ENCODE measurements at regions of chr10 and their contacts with region 1.

Region 1: GRCh38 chr10:23438550-23439441 is at the start of gene OTUD1:
- DNase-seq: peak; percentile 88 to 98 (median 94)
- ATAC-seq: peak; percentile 87
- H3K4me3 ChIP-seq: peak within 1 kb of the TSS; percentile 74
- H3K4me3 Mint-ChIP-seq: peak within 1 kb of the TSS; percentile 98
- H3K27ac ChIP-seq: peak within 1 kb of the TSS; percentile 76 to 81
- H3K27ac Mint-ChIP-seq: peak within 1 kb of the TSS; percentile 99
- H3K4me1 ChIP-seq: peaks cover 21% of the 10 kb centered on the region
- H3K4me1 Mint-ChIP-seq: peaks cover 42% of the 10 kb centered on the region
- H3K27me3 ChIP-seq: no peaks in the 10 kb centered on the region
- H3K27me3 Mint-ChIP-seq: no peaks in the 10 kb centered on the region
- CTCF ChIP-seq: no peak
- total RNA-seq, gene OTUD1: 94.5 to 94.8 TPM

Region 2: DNA sequence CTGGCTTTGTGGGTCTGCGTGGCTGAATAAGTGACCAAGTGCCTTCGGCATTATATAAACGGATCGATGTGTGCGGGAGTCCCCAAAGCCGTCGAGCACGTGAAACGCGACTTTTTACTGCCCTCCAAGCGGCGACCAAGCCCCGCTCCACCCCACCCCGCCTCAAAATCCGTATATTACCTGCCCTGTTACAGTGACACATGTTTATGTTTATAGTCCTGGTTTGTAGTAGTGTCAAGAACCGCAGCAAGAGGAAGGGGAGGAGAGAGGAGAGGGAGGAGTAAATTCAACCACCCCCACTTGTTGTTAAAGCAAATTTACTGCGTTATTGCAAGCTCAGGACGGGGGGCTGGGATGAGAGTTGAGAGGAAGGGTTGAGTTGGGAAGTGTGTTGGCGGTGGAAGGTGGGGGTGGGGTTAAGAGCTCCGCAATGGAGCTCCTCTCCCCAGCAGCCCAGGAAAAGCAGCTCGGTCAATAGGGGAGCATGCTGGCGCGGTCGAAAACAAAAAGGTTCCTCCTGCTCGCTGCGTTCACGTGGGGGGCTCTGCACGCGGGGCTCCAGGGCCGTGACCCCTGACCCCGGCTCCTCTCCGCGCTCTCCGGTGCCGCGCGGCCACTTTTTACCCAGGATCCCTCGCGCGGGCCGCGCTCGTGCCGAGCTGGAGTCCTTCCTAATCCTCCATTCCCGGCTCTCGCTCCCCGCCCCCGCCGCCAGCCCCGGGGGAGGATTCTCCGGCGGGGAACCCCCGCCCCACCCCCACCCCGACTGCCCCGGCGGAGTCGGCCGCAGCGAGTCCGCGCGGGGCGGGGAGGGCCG is 1913.2 kb before region 1 on chr10 and contains the start of gene SKIDA1:
- CTCF ChIA-PET with region 1: no interaction called
- POLR2A ChIA-PET with region 1: no interaction called
- intact Hi-C with region 1: loop called in 1 of 2 experiments (anchors 10 kb)
- DNase-seq: peak in 13 of 14 experiments; percentile 33 to 83 (median 50)
- ATAC-seq: peak; percentile 79
- H3K4me3 ChIP-seq: peak within 1 kb of the TSS; percentile 80
- H3K4me3 Mint-ChIP-seq: peak within 1 kb of the TSS; percentile 98
- H3K27ac ChIP-seq: peak within 1 kb of the TSS; percentile 61 to 66
- H3K27ac Mint-ChIP-seq: peak within 1 kb of the TSS; percentile 86
- H3K4me1 ChIP-seq: peaks cover 25% of the 10 kb centered on the region
- H3K4me1 Mint-ChIP-seq: peaks cover 37% of the 10 kb centered on the region
- H3K27me3 ChIP-seq: peaks cover 5 to 26% of the 10 kb centered on the region in 2 experiments
- H3K27me3 Mint-ChIP-seq: peaks cover 36% of the 10 kb centered on the region
- CTCF ChIP-seq: no peak
- total RNA-seq, gene SKIDA1: 0.22 to 0.25 TPM

Region 3: GRCh38 chr10:22228943-22229801 is 1209.6 kb before region 1 on chr10:
- CTCF ChIA-PET with region 1: no interaction called
- POLR2A ChIA-PET with region 1: no interaction called
- intact Hi-C with region 1: loop called in 1 of 2 experiments (anchors 10 kb)
- DNase-seq: peak; percentile 72 to 93 (median 82)
- ATAC-seq: peak; percentile 77
- H3K4me3 ChIP-seq: peak overlapping the region; percentile 62
- H3K4me3 Mint-ChIP-seq: peak overlapping the region; percentile 92
- H3K27ac ChIP-seq: peak overlapping the region; percentile 25 to 53
- H3K27ac Mint-ChIP-seq: peak overlapping the region; percentile 99
- H3K4me1 ChIP-seq: peaks cover 3% of the 10 kb centered on the region
- H3K4me1 Mint-ChIP-seq: peaks cover 19% of the 10 kb centered on the region
- H3K27me3 ChIP-seq: no peaks in the 10 kb centered on the region
- H3K27me3 Mint-ChIP-seq: peaks cover 11% of the 10 kb centered on the region
- CTCF ChIP-seq: no peak

Region 4: GRCh38 chr10:23338178-23338828 is 100.5 kb before region 1 on chr10:
- CTCF ChIA-PET with region 1: interaction called, 3 read pairs
- POLR2A ChIA-PET with region 1: interaction called, 16 read pairs
- intact Hi-C with region 1: loop called (anchors 5 to 10 kb)
- DNase-seq: no peak
- ATAC-seq: no peak
- H3K4me3 ChIP-seq: no peak overlapping the region
- H3K4me3 Mint-ChIP-seq: no peak overlapping the region
- H3K27ac ChIP-seq: no peak overlapping the region
- H3K27ac Mint-ChIP-seq: no peak overlapping the region
- H3K4me1 ChIP-seq: peaks cover 20% of the 10 kb centered on the region
- H3K4me1 Mint-ChIP-seq: peaks cover 31% of the 10 kb centered on the region
- H3K27me3 ChIP-seq: no peaks in the 10 kb centered on the region
- H3K27me3 Mint-ChIP-seq: no peaks in the 10 kb centered on the region
- CTCF ChIP-seq: no peak

Region 5: GRCh38 chr10:23362879-23363792 is 75.7 kb before region 1 on chr10:
- CTCF ChIA-PET with region 1: no interaction called
- POLR2A ChIA-PET with region 1: interaction called, 49 read pairs
- intact Hi-C with region 1: loop called (anchors 5 kb)
- DNase-seq: peak in 11 of 14 experiments; percentile 25 to 83 (median 38)
- ATAC-seq: peak; percentile 84
- H3K4me3 ChIP-seq: peak overlapping the region; percentile 36
- H3K4me3 Mint-ChIP-seq: peak overlapping the region; percentile 79
- H3K27ac ChIP-seq: peak overlapping the region; percentile 68 to 72
- H3K27ac Mint-ChIP-seq: peak overlapping the region; percentile 80
- H3K4me1 ChIP-seq: peaks cover 43% of the 10 kb centered on the region
- H3K4me1 Mint-ChIP-seq: peaks cover 44% of the 10 kb centered on the region
- H3K27me3 ChIP-seq: no peaks in the 10 kb centered on the region
- H3K27me3 Mint-ChIP-seq: no peaks in the 10 kb centered on the region
- CTCF ChIP-seq: no peak

Region 6: GRCh38 chr10:23448802-23449570 is 10.2 kb after region 1 on chr10:
- CTCF ChIA-PET with region 1: interaction called, 3 read pairs
- POLR2A ChIA-PET with region 1: interaction called, 11 read pairs
- intact Hi-C with region 1: loop called in 1 of 2 experiments (anchors 1 kb)
- DNase-seq: peak in 3 of 14 experiments; percentile 50 to 61 (median 51)
- ATAC-seq: peak; percentile 76
- H3K4me3 ChIP-seq: no peak overlapping the region
- H3K4me3 Mint-ChIP-seq: no peak overlapping the region
- H3K27ac ChIP-seq: no peak overlapping the region
- H3K27ac Mint-ChIP-seq: peak overlapping the region; percentile 79
- H3K4me1 ChIP-seq: peaks cover 5% of the 10 kb centered on the region
- H3K4me1 Mint-ChIP-seq: peaks cover 31% of the 10 kb centered on the region
- H3K27me3 ChIP-seq: no peaks in the 10 kb centered on the region
- H3K27me3 Mint-ChIP-seq: no peaks in the 10 kb centered on the region
- CTCF ChIP-seq: no peak

Region 7: GRCh38 chr10:24724381-24725228 is 1285.8 kb after region 1 on chr10:
- CTCF ChIA-PET with region 1: no interaction called
- POLR2A ChIA-PET with region 1: no interaction called
- intact Hi-C with region 1: loop called in 1 of 2 experiments (anchors 5 kb)
- DNase-seq: peak; percentile 87 to 98 (median 94)
- ATAC-seq: peak; percentile 89
- H3K4me3 ChIP-seq: peak overlapping the region; percentile 92
- H3K4me3 Mint-ChIP-seq: peak overlapping the region; percentile 97
- H3K27ac ChIP-seq: peak overlapping the region; percentile 47 to 66
- H3K27ac Mint-ChIP-seq: peak overlapping the region; percentile 85
- H3K4me1 ChIP-seq: peaks cover 22% of the 10 kb centered on the region
- H3K4me1 Mint-ChIP-seq: peaks cover 22% of the 10 kb centered on the region
- H3K27me3 ChIP-seq: no peaks in the 10 kb centered on the region
- H3K27me3 Mint-ChIP-seq: no peaks in the 10 kb centered on the region
- CTCF ChIP-seq: peak; percentile 6